Gastrocnemius medialis (tissue), 4 donors: ENCODE measurements at regions of chr15 and their contacts with region 1.

Region 1: DNA sequence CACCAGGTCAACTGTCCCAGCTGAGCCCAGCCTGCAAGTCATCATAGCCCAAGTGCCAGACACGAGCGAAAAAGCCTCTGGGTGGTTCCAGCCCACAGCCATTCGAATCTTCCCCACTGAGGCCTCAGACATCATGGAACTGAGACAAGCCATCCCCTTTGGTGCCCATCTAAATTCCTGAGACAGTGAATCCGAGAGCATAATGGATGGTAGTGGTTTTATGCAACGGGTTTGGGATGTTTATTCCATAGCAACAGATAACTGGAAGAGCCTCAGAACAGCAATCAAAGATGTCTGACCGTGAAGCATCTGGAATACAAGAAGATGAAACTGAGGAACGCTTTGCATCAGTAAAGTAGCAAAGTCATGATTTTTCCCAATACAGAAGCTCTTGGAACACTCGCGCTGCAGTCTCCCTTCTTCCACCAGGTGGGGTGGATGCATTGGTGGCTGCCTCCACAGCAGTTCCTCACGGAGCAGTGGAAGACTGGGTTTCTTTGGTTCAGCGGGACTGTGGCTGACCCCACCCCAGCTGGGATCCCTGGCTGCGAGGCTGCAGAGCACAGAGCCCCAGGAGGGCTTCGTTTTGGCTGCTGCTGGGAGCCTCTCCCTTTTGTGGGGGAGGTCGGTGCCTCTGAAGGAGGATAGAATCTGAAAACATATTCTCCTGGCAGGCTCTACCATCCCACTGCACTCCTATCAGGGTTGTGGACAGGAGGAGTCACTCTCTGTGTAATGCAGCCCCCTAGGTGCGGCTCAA is 26.4 kb upstream of the PDE8A start:
- DNase-seq: peak; percentile 39 to 68
- ATAC-seq: peak; percentile 89 to 92
- H3K4me3 ChIP-seq: peak overlapping the region; percentile 34 to 51 (median 39)
- H3K27ac ChIP-seq: no peak overlapping the region
- H3K4me1 ChIP-seq: peaks cover 4 to 10% of the 10 kb centered on the region in 2 donors
- H3K27me3 ChIP-seq: no peaks in the 10 kb centered on the region
- CTCF ChIP-seq: peak; percentile 83 to 94 (median 90)
- POLR2A ChIP-seq: no peak

Region 2: GRCh38 chr15:84915011-84915958 is 40.0 kb before region 1 on chr15:
- in situ Hi-C with region 1: no loop called
- intact Hi-C with region 1: no loop called
- DNase-seq: peak; percentile 92 to 94
- ATAC-seq: peak; percentile 75 to 79
- H3K4me3 ChIP-seq: no peak overlapping the region
- H3K27ac ChIP-seq: peak overlapping the region; percentile 82 to 91 (median 90)
- H3K4me1 ChIP-seq: peaks cover 44 to 56% of the 10 kb centered on the region in 2 donors
- H3K27me3 ChIP-seq: no peaks in the 10 kb centered on the region
- CTCF ChIP-seq: peak in 2 of 5 experiments; percentile 11 to 24
- POLR2A ChIP-seq: peak; percentile 63 to 85

Region 3: GRCh38 chr15:85168642-85169173 is 213.4 kb after region 1 on chr15:
- in situ Hi-C with region 1: no loop called
- intact Hi-C with region 1: loop called (anchors 10 kb)
- DNase-seq: no peak
- ATAC-seq: no peak
- H3K4me3 ChIP-seq: peak overlapping the region in 1 of 4 donors; percentile 11
- H3K27ac ChIP-seq: no peak overlapping the region
- H3K4me1 ChIP-seq: no peaks in the 10 kb centered on the region
- H3K27me3 ChIP-seq: peaks cover 0 to 4% (median 4%) of the 10 kb centered on the region in 3 donors
- CTCF ChIP-seq: no peak
- POLR2A ChIP-seq: no peak

Region 4: GRCh38 chr15:85289677-85290365 is 334.6 kb after region 1 on chr15:
- in situ Hi-C with region 1: no loop called
- intact Hi-C with region 1: loop called (anchors 10 kb)
- DNase-seq: peak; percentile 44 to 65
- ATAC-seq: peak; percentile 78 to 87
- H3K4me3 ChIP-seq: no peak overlapping the region
- H3K27ac ChIP-seq: no peak overlapping the region
- H3K4me1 ChIP-seq: no peaks in the 10 kb centered on the region
- H3K27me3 ChIP-seq: peaks cover 0 to 3% (median 0%) of the 10 kb centered on the region in 3 donors
- CTCF ChIP-seq: peak in 4 of 5 experiments; percentile 14 to 54 (median 53)
- POLR2A ChIP-seq: no peak